GM10248 (cell line): ENCODE measurements at regions of chr1 and their contacts with region 1.

Region 1: DNA sequence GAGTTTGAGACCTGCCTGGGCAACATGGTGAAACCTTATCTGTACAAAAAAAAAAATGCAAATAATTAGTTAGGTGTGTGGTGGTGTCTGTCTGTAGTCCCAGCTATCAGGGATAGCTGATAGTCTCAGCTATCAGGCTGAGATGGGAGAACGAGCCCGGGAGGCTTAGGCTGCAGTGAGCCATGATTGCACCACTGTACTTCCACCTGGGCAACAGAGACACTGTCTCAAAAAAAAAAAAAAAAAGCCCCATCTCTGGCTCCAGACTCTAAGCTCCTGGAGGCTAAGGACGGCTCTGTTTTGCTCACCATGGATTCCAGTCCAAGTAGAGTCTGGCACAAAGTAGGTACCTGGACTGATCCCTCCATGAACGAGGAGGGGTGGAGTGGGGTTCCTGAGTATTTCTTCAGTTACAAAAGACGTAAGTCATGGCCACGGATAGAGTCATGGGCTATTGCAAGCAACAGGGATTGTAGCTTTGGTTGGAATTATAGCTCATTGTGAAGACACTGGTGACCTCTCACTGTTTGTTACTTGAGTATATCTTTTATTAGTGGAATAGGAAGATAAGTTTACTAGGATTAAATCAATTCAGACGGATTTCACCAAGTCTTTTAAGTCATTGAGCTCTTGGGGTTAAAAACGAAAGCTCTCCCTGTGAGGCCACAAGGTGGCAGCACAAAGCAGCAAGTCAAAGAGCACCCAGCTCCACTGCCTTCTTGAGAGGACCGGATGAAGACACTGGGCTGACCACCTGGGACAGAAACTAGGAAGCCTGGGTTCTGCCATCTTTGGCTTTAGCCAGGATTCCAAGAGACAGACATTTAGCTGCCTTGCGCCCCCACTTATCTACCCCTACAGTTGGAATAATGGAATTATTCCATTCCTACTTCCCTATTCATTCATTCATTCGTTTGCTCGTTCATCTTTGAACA is 35.6 kb upstream of the TMEM61 start:
- DNase-seq: peak; percentile 80
- CTCF ChIP-seq: peak; percentile 78

Region 2: GRCh38 chr1:54331091-54331772 is 613.6 kb before region 1 on chr1:
- CTCF ChIA-PET with region 1: no interaction called
- POLR2A ChIA-PET with region 1: no interaction called
- DNase-seq: no peak
- CTCF ChIP-seq: no peak

Region 3: DNA sequence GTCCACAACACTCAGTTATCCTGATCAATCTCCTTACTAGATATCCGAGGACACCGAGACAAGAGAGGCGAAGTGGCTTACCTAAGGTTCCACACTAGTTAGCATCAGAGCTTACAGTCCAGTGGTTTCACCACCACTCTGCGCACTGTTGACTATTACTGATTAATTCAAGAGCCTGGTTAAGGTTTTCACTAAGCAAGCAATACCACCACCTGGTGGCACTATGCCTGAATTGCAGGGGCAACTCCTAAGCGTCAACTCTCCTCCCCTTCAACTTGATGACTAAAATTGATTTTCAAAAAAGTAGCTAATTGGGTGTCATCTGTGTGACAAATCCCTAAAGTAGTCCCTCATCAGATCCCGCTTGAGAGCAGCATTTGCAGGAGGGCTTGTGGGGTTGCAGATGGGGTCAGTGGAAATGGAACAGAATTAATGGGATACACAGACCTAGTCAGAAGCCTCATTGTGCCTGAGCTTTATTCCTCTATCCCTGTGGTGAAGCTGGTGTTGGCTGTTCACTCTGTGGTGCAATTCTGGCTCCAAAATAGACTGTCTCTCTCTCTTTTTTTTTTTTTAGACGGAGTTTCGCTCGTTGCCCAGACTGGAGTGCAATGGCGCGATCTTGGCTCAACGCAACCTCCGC is 152.9 kb before region 1 on chr1:
- CTCF ChIA-PET with region 1: no interaction called
- POLR2A ChIA-PET with region 1: no interaction called
- DNase-seq: no peak
- CTCF ChIP-seq: peak; percentile 18

Region 4: GRCh38 chr1:54927472-54928240 is 17.2 kb before region 1 on chr1:
- CTCF ChIA-PET with region 1: interaction called, 49 read pairs
- POLR2A ChIA-PET with region 1: no interaction called
- DNase-seq: no peak
- CTCF ChIP-seq: no peak

Region 5: DNA sequence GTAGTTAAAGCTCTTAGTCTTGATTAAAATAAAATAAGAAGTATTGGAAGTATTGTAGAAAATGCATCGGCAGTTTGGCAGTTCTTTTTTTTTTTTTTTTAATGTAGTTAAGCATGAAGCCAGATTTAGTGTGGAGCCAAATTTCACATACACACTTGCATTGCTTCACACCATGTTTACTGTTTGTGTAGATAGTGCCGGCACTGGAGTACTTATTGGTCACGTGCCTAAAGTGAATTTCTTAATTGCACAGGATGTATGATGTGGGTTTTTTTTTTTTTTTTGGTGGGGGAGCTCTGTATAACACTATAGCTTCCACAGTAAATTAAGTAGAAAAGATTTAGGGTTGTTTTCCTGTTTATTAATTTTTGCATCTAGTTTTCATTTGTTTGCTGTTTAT is 14.4 kb after region 1 on chr1:
- CTCF ChIA-PET with region 1: interaction called, 25 read pairs
- POLR2A ChIA-PET with region 1: no interaction called
- DNase-seq: no peak
- CTCF ChIP-seq: no peak

Region 6: GRCh38 chr1:54973205-54973921 is 28.5 kb after region 1 on chr1:
- CTCF ChIA-PET with region 1: interaction called, 26 read pairs
- POLR2A ChIA-PET with region 1: no interaction called
- DNase-seq: peak; percentile 10
- CTCF ChIP-seq: peak; percentile 3

Region 7: GRCh38 chr1:55007625-55008024 is 62.7 kb after region 1 on chr1:
- CTCF ChIA-PET with region 1: interaction called, 609 read pairs
- POLR2A ChIA-PET with region 1: no interaction called
- DNase-seq: no peak
- CTCF ChIP-seq: no peak